Activated CD8-positive, alpha-beta T cell treated with anti-CD3 and anti-CD28 coated beads for 36 hours (primary cell): ENCODE measurements at regions of chr9 and their contacts with region 1.

Region 1: DNA sequence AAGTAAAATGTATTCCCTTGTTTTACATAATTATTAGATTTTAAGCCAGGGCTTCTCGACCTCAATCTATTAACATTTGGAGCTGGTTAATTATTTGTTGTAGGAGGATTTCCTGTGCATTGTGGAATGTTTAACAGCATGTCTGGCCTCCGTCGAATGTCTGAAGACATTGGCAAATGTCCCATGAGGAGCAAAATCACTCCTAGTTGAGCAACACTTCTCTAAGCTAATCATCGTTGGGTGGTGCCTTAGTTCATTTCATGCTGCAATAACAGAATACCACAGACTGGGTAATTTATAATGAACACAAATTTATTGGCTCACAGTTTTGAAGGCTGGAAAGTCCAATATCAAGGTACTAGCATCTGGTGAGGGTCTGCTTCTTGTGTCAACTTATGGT is 13.4 kb upstream of the VPS13A start:
- DNase-seq: no peak
- ATAC-seq: no peak
- H3K4me3 Mint-ChIP-seq: no peak overlapping the region
- H3K27ac Mint-ChIP-seq: no peak overlapping the region
- H3K4me1 Mint-ChIP-seq: no peaks in the 10 kb centered on the region
- H3K27me3 Mint-ChIP-seq: peaks cover 2% of the 10 kb centered on the region
- CTCF ChIP-seq: no peak

Region 2: DNA sequence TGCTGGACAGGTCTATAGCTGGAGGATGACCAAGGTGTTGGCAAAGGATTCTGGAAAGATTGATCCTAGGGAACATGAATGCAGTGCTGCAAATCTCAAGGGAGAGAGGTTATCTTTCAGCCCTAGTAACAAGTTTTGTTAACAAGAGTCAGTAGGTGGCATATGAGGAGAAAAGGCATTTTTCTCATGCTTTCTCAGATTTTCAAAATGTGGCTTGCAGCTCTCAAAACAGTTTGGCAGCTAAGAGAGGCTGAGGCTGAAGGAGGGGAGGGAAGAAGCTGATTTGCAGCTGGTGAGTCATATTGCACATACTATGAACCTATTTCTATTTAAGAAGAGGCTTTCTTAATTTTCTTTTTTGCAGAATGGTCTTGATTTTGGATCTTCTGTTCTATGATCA is 463.9 kb before region 1 on chr9:
- CTCF ChIA-PET with region 1: no interaction called
- POLR2A ChIA-PET with region 1: no interaction called
- intact Hi-C with region 1: no loop called
- DNase-seq: no peak
- ATAC-seq: no peak
- H3K4me3 Mint-ChIP-seq: no peak overlapping the region
- H3K27ac Mint-ChIP-seq: no peak overlapping the region
- H3K4me1 Mint-ChIP-seq: no peaks in the 10 kb centered on the region
- H3K27me3 Mint-ChIP-seq: peaks cover 12% of the 10 kb centered on the region
- CTCF ChIP-seq: no peak

Region 3: DNA sequence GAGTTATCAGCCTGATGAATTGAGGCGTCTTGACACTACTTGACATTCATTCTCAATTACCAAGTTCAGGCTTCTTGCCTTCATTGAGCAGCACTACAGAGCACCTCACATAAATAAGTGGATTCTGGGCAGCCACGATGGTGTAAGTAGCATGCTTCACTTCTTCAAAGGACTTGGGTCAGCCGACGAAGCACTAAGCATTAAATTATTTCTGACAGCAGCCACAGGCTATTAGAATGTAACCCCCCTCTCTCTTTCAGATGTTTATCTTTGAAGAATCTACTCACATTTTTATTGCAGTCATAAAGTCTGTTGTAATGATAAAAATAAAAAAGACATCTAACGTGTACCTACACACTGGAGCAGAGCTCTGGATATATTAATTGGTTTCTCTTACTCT is 32.5 kb before region 1 on chr9:
- CTCF ChIA-PET with region 1: no interaction called
- POLR2A ChIA-PET with region 1: no interaction called
- intact Hi-C with region 1: no loop called
- DNase-seq: no peak
- ATAC-seq: no peak
- H3K4me3 Mint-ChIP-seq: no peak overlapping the region
- H3K27ac Mint-ChIP-seq: no peak overlapping the region
- H3K4me1 Mint-ChIP-seq: no peaks in the 10 kb centered on the region
- H3K27me3 Mint-ChIP-seq: peaks cover 11% of the 10 kb centered on the region
- CTCF ChIP-seq: no peak

Region 4: GRCh38 chr9:77149879-77150278 is 14.0 kb before region 1 on chr9:
- CTCF ChIA-PET with region 1: interaction called, 18 read pairs
- POLR2A ChIA-PET with region 1: no interaction called
- intact Hi-C with region 1: no loop called
- DNase-seq: no peak
- ATAC-seq: no peak
- H3K4me3 Mint-ChIP-seq: no peak overlapping the region
- H3K27ac Mint-ChIP-seq: no peak overlapping the region
- H3K4me1 Mint-ChIP-seq: no peaks in the 10 kb centered on the region
- H3K27me3 Mint-ChIP-seq: peaks cover 21% of the 10 kb centered on the region
- CTCF ChIP-seq: no peak

Region 5: GRCh38 chr9:77177161-77177893 is 13.4 kb after region 1 on chr9 and contains the start of gene VPS13A:
- CTCF ChIA-PET with region 1: interaction called, 27 read pairs
- POLR2A ChIA-PET with region 1: interaction called, 3 read pairs
- intact Hi-C with region 1: no loop called
- DNase-seq: peak; percentile 98
- ATAC-seq: peak; percentile 87
- H3K4me3 Mint-ChIP-seq: peak within 1 kb of the TSS; percentile 90
- H3K27ac Mint-ChIP-seq: peak within 1 kb of the TSS; percentile 92
- H3K4me1 Mint-ChIP-seq: peaks cover 25% of the 10 kb centered on the region
- H3K27me3 Mint-ChIP-seq: no peaks in the 10 kb centered on the region
- CTCF ChIP-seq: no peak
- total RNA-seq, gene VPS13A: 34.4 to 37.0 TPM

Region 6: DNA sequence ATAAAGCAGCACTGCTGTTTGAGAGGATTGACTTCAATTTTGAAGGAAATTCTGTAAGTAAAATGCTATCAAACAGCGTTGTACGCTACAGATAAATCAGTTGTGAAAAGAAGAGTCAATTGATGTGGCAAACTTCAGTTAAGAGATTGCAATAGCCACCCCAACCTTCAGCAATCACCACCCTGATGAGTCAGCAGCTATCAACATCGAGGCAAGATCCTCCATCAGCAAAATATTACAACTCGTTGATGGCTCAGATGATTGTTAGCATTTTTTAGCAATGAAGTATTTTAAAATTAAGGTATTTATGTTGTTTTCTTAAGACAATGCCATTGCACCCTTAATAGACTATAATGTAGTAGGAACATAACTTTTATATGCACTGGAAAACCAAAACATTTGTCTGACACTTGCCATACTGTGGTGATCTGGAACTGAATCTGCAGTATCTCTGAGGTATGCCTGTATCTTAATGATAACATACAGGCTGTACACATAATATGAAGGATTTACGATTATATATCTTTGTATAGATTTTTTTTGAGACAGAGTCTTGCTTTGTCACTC is 60.9 kb after region 1 on chr9:
- CTCF ChIA-PET with region 1: interaction called, 10 read pairs
- POLR2A ChIA-PET with region 1: no interaction called
- intact Hi-C with region 1: no loop called
- DNase-seq: no peak
- ATAC-seq: no peak
- H3K4me3 Mint-ChIP-seq: no peak overlapping the region
- H3K27ac Mint-ChIP-seq: no peak overlapping the region
- H3K4me1 Mint-ChIP-seq: peaks cover 4% of the 10 kb centered on the region
- H3K27me3 Mint-ChIP-seq: no peaks in the 10 kb centered on the region
- CTCF ChIP-seq: no peak